GM13976 (cell line): ENCODE measurements at regions of chr10 and their contacts with region 1.

Region 1: DNA sequence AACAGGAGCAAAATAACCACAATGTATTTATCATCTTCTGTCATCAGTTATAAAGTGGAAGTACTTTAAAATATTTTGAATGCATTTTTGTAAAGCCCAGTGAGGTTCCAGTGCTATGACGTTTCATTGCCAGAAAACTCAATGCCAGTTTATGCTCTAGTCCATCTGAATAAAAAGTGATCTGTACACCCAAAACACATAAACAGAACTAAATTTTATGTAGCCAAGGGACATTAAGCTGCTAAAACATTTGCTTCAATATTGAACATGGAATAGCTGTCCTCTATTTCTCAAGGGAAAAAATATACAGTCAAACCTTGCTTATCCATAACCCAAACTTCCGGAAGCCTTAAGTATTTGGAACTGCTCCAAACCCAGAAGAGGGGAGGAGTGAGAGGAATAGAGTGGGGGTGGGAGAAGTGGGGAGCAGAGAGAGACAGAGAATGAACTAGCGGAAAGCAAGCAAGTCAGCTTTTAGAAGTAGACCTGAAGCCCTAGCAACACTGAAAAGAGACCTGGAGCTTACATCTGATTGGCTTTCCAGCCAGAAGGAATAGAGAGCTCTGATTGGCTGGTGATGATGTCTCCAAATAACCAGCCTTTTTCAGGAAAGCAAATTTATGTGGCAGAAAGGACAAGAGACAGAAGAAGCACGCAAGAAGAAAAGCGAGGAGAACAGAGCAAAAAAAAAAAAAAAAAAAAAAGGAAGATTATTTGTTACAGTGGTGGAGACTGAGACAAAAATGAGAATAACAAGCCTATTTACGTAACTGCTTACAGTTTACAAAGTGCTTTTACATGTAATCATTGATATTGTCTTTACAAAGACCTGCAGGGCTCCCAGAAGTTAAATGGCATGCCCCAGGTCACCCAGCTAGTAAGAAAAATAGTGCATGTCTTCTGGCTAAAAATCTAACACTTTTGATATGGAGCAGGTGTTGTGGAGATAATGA is 196.0 kb downstream of the RNLS start:
- DNase-seq: peak; percentile 46
- CTCF ChIP-seq: no peak

Region 2: DNA sequence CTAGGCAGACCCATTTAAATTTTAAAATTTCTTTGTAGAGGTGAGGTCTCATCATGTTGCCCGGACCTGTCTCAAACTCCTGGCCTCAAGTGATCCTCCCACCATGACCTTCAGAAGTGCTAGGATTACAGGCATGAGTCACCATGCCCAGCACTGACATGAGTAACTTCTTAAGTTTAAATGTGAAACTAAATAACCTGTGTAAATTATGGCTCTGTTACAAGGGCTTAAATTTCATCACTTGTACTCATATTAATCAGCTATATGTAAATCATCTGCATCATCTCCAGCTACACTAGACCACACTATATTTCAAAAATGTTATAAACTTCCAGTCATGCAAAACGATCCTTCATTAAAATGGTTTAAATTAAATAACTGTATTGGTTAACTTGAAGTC is 625.2 kb before region 1 on chr10:
- in situ Hi-C with region 1: no loop called
- DNase-seq: no peak
- CTCF ChIP-seq: no peak

Region 3: GRCh38 chr10:88120599-88121333 is 266.3 kb before region 1 on chr10:
- in situ Hi-C with region 1: loop called (anchors 10 kb)
- DNase-seq: no peak
- CTCF ChIP-seq: no peak

Region 4: DNA sequence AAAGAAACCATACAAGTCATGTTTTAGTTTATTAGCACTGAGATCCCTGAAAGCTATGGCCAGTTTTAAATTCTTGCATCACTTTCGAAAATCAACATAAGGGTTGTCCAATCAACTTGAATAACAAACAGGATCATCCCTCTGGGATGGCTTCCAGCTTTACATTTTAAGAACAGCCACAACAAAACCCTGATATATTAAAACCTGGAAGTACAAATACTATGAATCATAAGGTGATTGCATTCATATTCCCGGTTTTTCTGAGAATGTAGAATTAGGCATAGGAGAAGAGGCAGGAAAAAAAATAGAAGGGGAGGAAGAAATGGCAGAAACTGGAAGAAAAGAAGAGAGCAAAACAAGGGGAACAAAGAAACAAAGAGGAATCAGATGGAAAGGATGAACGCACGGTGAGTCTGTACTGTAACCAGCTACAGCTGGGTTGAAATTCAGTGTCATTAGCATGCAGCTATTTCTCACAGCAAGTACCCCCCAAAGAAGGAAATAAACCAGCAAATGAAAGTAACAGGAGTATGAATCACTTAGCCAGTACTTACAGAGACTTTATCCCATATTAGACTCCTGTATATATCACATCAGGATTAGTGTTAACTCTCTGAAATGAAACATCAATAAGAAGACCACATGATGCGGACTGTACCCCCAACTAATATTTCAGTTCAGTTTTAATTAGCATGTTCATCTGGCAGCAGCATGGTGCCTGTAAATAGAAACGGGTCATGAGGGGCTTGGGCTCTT is 105.3 kb before region 1 on chr10:
- in situ Hi-C with region 1: loop called (anchors 5 kb)
- DNase-seq: no peak
- CTCF ChIP-seq: no peak

Region 5: GRCh38 chr10:88865281-88865876 is 478.3 kb after region 1 on chr10:
- in situ Hi-C with region 1: no loop called
- DNase-seq: no peak
- CTCF ChIP-seq: no peak